Activated CD4-positive, alpha-beta T cell treated with anti-CD3 and anti-CD28 coated beads for 36 hours (primary cell): ENCODE measurements at regions of chr1 and their contacts with region 1.

Region 1: GRCh38 chr1:25338188-25338981 is at the start of gene TMEM50A:
- DNase-seq: peak; percentile 93
- ATAC-seq: peak; percentile 76
- H3K4me3 Mint-ChIP-seq: peak within 1 kb of the TSS; percentile 94
- H3K27ac Mint-ChIP-seq: peak within 1 kb of the TSS; percentile 93
- H3K4me1 Mint-ChIP-seq: peaks cover 31% of the 10 kb centered on the region
- H3K27me3 Mint-ChIP-seq: no peaks in the 10 kb centered on the region
- total RNA-seq, gene TMEM50A: 98.0 to 120 TPM

Region 2: GRCh38 chr1:25239681-25240541 is 98.5 kb before region 1 on chr1:
- CTCF ChIA-PET with region 1: interaction called, 3 read pairs
- POLR2A ChIA-PET with region 1: no interaction called
- intact Hi-C with region 1: loop called in 1 of 2 experiments (anchors 5 kb)
- DNase-seq: peak; percentile 96
- ATAC-seq: peak; percentile 91
- H3K4me3 Mint-ChIP-seq: peak overlapping the region; percentile 74
- H3K27ac Mint-ChIP-seq: peak overlapping the region; percentile 89
- H3K4me1 Mint-ChIP-seq: peaks cover 43% of the 10 kb centered on the region
- H3K27me3 Mint-ChIP-seq: no peaks in the 10 kb centered on the region

Region 3: DNA sequence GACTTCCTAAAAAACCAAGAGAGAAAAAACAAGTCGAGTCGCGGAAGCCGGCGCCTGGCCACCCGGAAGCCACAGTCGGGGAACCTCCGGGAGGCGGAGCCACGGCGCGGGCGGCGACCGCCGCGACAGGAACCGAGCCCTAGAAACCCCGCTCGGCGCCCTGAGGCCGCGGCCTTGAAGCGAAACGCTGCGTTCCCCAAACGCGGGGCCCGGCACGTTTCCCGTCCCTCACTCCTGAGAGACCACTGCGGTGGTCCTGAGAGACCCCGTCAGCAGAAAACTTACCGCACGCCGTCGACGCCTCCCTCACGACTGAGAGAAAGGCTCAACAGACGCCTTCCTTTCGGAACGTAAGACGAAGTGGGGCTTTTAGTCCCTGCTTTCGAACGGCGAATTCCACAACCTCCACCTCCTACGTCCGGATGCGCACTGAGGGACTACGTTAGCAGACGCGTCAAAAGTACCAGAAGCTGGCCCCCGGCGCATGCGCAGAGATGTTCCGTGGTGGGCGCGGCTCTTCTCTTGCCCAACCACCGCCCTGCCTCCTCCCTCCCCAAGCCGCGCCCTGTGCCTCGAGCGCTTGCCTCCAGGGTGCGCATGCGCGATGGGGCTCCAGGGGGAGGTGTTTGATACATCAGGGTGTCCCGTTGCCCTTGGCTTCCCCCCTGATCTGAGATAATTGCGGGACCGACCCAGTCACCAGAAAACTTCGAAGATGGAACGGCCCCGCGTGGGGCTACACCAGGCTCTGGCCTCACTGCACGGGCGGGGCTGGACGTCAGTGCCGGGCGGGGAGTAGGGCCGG is 91.2 kb before region 1 on chr1 and contains the start of gene RSRP1:
- CTCF ChIA-PET with region 1: no interaction called
- POLR2A ChIA-PET with region 1: no interaction called
- intact Hi-C with region 1: loop called (anchors 2 to 5 kb)
- DNase-seq: peak; percentile 100
- ATAC-seq: peak; percentile 90
- H3K4me3 Mint-ChIP-seq: peak within 1 kb of the TSS; percentile 96
- H3K27ac Mint-ChIP-seq: peak within 1 kb of the TSS; percentile 99
- H3K4me1 Mint-ChIP-seq: peaks cover 40% of the 10 kb centered on the region
- H3K27me3 Mint-ChIP-seq: no peaks in the 10 kb centered on the region
- total RNA-seq, gene RSRP1: 86.8 to 120 TPM

Region 4: DNA sequence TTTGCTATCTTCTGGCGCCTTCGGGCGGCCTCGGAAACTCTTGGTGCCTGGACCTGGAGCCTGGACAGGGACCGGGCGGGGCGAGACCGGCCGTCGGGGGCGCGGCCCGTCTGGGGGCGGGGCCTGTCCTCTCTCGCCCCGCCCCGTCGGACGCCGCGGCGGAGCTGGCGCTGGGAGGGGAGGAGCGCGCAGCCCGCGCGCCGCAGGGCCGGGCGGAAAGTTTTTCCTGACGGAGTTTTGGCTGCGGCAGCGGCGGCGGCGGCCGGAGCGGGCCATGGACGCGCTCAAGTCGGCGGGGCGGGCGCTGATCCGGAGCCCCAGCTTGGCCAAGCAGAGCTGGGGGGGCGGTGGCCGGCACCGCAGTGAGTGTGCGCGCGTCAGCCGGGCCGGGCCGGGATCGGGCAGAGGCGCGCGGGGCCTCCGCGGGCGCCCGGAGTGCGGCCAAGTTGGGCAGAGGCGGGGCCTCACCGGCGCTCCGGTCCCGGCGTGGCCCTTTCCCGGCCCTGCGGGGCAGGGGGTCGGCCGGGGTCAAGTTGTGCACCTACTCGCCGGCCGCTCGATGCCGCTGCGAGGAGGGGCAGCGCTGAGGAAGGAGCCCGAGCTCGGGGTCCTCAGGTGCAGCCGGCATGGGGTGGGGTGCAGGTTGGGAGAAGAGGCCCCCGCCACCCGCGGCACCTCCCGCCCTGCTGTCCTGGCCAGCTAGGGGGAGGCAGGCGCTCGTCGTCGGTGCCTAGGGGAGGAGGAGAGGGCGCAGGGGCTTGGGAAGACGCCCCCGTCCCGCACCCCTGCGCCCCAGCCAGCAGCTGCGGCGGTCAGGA is 205.2 kb after region 1 on chr1 and contains the start of gene LDLRAP1:
- CTCF ChIA-PET with region 1: no interaction called
- POLR2A ChIA-PET with region 1: no interaction called
- intact Hi-C with region 1: loop called in 1 of 2 experiments (anchors 2 kb)
- DNase-seq: peak; percentile 78
- ATAC-seq: peak; percentile 89
- H3K4me3 Mint-ChIP-seq: peak within 1 kb of the TSS; percentile 80
- H3K27ac Mint-ChIP-seq: peak within 1 kb of the TSS; percentile 75
- H3K4me1 Mint-ChIP-seq: peaks cover 34% of the 10 kb centered on the region
- H3K27me3 Mint-ChIP-seq: no peaks in the 10 kb centered on the region
- total RNA-seq, gene LDLRAP1: 13.0 to 14.6 TPM